ENCODE measurements at regions of chr18 and their contacts with region 1.

Region 1: GRCh38 chr18:21191596-21192307 is 50.3 kb upstream of the GREB1L start:
- DNase-seq: peak; percentile 23 to 67 (median 60)
- ATAC-seq: peak in 3 of 4 donors; percentile 66 to 78 (median 78)
- H3K4me3 ChIP-seq: no peak overlapping the region
- H3K27ac ChIP-seq: no peak overlapping the region
- H3K4me1 ChIP-seq: no peaks in the 10 kb centered on the region
- H3K27me3 ChIP-seq: peaks cover 0 to 3% (median 0%) of the 10 kb centered on the region in 9 donors
- CTCF ChIP-seq: peak; percentile 24 to 61 (median 42)
- POLR2A ChIP-seq: no peak

Region 2: DNA sequence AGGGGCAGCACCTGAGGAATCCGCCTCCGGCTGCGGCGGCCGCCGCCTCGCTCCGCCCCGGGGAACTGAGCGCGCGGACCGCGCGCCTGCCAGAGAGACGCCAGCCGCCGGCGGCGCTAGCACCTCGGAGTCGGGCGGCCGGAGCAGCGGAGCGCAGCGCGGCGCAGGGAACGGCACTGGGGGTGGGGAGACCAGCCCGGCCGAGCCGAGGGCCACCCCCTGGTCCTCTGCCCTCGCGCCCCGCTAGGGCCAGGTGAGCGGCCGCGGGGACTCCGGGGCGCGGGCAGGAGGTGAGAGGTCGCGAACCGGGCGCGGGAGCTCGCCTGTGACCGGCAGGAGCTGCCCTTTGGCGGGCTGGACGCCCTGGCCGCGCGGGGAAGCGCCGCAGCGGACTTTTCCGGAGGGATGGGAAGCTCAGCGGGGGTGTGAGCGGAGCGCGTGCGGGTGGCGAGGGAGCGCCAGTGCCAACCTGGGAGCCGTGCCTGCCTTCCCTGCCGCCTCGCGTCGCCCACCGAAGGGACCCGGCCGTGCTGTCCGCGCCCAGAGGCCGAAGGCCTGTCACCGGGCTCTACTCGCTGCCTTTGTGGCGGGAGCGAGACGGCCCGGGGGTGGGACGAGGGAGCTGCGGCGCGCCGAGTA is 50.5 kb after region 1 on chr18 and contains the start of gene GREB1L:
- intact Hi-C with region 1: loop called in 3 of 10 experiments (anchors 5 kb)
- DNase-seq: peak; percentile 50 to 78 (median 70)
- ATAC-seq: peak; percentile 86 to 95 (median 92)
- H3K4me3 ChIP-seq: peak within 1 kb of the TSS; percentile 41 to 82 (median 61)
- H3K27ac ChIP-seq: peak within 1 kb of the TSS; percentile 20 to 86 (median 69)
- H3K4me1 ChIP-seq: peaks cover 0 to 18% (median 0%) of the 10 kb centered on the region in 12 donors
- H3K27me3 ChIP-seq: peaks cover 0 to 66% (median 15%) of the 10 kb centered on the region in 9 donors
- CTCF ChIP-seq: peak in 8 of 12 donors; percentile 24 to 52 (median 38)
- POLR2A ChIP-seq: peak in 1 of 2 donors; percentile 19
- total RNA-seq, gene GREB1L: 7.5 to 21.5 (median 10.6) TPM

Region 3: GRCh38 chr18:21270453-21270852 is 78.7 kb after region 1 on chr18:
- intact Hi-C with region 1: no loop called
- DNase-seq: no peak
- ATAC-seq: no peak
- H3K4me3 ChIP-seq: no peak overlapping the region
- H3K27ac ChIP-seq: no peak overlapping the region
- H3K4me1 ChIP-seq: peaks cover 0 to 2% (median 0%) of the 10 kb centered on the region in 12 donors
- H3K27me3 ChIP-seq: no peaks in the 10 kb centered on the region
- CTCF ChIP-seq: no peak
- POLR2A ChIP-seq: no peak

Region 4: GRCh38 chr18:21341141-21341540 is 149.4 kb after region 1 on chr18:
- intact Hi-C with region 1: no loop called
- DNase-seq: no peak
- ATAC-seq: no peak
- H3K4me3 ChIP-seq: no peak overlapping the region
- H3K27ac ChIP-seq: no peak overlapping the region
- H3K4me1 ChIP-seq: no peaks in the 10 kb centered on the region
- H3K27me3 ChIP-seq: no peaks in the 10 kb centered on the region
- CTCF ChIP-seq: no peak
- POLR2A ChIP-seq: no peak

Region 5: GRCh38 chr18:21444465-21445023 is 252.8 kb after region 1 on chr18:
- intact Hi-C with region 1: loop called (anchors 1 to 5 kb)
- DNase-seq: no peak
- ATAC-seq: peak in 3 of 4 donors; percentile 57 to 78 (median 69)
- H3K4me3 ChIP-seq: no peak overlapping the region
- H3K27ac ChIP-seq: no peak overlapping the region
- H3K4me1 ChIP-seq: peaks cover 0 to 6% (median 0%) of the 10 kb centered on the region in 12 donors
- H3K27me3 ChIP-seq: no peaks in the 10 kb centered on the region
- CTCF ChIP-seq: peak; percentile 38 to 70 (median 60)
- POLR2A ChIP-seq: no peak

Region 6: GRCh38 chr18:21600526-21601410 is 409.0 kb after region 1 on chr18 and contains the start of gene ESCO1:
- intact Hi-C with region 1: loop called in 2 of 10 experiments (anchors 10 kb)
- DNase-seq: peak; percentile 93 to 97 (median 97)
- ATAC-seq: peak; percentile 92 to 97 (median 96)
- H3K4me3 ChIP-seq: peak within 1 kb of the TSS; percentile 67 to 97 (median 84)
- H3K27ac ChIP-seq: peak within 1 kb of the TSS; percentile 81 to 99 (median 94)
- H3K4me1 ChIP-seq: peaks cover 0 to 27% (median 14%) of the 10 kb centered on the region in 12 donors
- H3K27me3 ChIP-seq: no peaks in the 10 kb centered on the region
- CTCF ChIP-seq: peak; percentile 95 to 100 (median 98)
- POLR2A ChIP-seq: peak in 1 of 2 donors; percentile 79
- total RNA-seq, gene ESCO1: 7.6 to 11.1 (median 9.8) TPM

Region 7: DNA sequence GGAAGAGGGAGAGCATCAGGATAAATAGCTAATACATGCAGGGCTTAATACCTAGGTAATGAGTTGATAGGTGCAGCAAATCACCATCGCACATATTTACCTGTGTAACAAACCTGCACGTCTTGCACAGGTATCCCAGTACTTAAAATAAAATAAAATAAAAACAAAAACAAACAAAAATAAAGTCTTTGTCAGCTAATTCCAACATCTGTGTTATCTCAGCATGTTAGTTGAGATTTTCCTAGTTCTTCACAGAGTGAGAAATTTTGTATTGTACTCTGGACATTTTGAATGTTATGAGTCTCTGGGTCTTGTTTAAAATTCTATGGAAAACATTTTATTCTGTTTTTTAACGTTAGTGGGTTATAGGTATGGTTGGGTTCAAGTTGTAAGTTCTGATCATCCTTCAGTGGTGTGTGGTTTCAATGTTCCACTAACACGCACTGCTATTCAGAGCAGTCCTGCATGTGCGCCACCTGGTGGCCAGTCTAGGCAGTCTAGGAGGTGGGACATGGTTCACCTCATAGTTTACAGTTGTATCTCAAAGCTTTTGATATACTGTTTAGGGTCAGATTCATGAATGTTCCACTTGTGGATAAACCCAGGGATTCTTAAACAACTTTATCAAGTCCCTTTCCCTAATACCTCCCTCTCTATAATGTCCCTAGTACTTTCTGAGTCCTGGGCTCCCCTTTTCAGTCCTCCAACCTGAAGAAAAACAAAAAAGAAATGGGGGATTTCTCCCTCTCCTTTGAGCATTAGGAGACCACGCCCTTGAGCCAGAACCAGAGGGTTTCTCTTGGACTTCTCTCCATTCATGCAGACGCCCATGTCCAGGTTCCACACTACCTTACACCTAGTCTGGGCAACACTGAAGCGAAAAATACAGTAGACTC is 764.3 kb after region 1 on chr18:
- intact Hi-C with region 1: loop called in 9 of 10 experiments (anchors 5 to 10 kb)
- DNase-seq: peak; percentile 67 to 90 (median 76)
- ATAC-seq: peak; percentile 71 to 94 (median 92)
- H3K4me3 ChIP-seq: no peak overlapping the region
- H3K27ac ChIP-seq: no peak overlapping the region
- H3K4me1 ChIP-seq: peaks cover 0 to 12% (median 0%) of the 10 kb centered on the region in 12 donors
- H3K27me3 ChIP-seq: peaks cover 0 to 3% (median 0%) of the 10 kb centered on the region in 9 donors
- CTCF ChIP-seq: peak; percentile 86 to 95 (median 90)
- POLR2A ChIP-seq: no peak